K562 (cell line): ENCODE measurements at regions of chr17 and their contacts with region 1.

Region 1: GRCh38 chr17:64281962-64282727 is 19.1 kb upstream of the TEX2 start:
- DNase-seq: peak; percentile 73 to 81 (median 80)
- ATAC-seq: peak; percentile 80
- H3K4me3 ChIP-seq: no peak overlapping the region
- H3K27ac ChIP-seq: no peak overlapping the region
- H3K4me1 ChIP-seq: peaks cover 0 to 3% of the 10 kb centered on the region in 2 experiments; a peak in 1 of 5 replicates
- H3K27me3 ChIP-seq: no peaks in the 10 kb centered on the region
- CTCF ChIP-seq: peak; percentile 79 to 92 (median 88)
- EP300 ChIP-seq: no peak
- POLR2A ChIP-seq: no peak
- RAD21 ChIP-seq: peak; percentile 84

Region 2: DNA sequence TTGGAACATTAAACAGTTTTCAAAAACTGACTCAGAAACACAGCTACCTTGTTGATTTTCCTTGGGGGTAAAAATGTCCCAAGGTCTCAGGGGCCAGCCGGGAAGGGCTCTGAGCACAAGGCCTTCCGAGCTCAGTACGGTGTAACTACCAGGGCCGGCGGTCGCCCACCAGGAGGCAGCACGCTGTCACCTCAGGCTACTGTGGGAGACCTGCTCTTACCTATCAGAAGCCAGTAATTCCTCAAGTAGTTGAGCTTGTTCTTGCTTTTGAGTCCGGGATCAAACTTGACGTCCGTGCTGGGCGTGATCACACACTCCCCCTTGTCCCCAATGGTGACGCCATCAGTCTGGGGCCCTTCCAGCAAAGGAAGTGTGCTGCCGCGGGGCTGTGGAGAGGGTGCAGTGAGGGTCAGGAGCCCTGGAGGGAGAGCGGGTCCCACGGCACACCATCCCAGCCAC is 218.3 kb before region 1 on chr17:
- CTCF ChIA-PET with region 1: interaction called, 6 read pairs
- POLR2A ChIA-PET with region 1: no interaction called
- in situ Hi-C with region 1: no loop called
- intact Hi-C with region 1: loop called (anchors 10 kb)
- DNase-seq: peak; percentile 43 to 58 (median 54)
- ATAC-seq: peak; percentile 98
- H3K4me3 ChIP-seq: no peak overlapping the region
- H3K27ac ChIP-seq: no peak overlapping the region; the same call in 2 of the 3 replicates
- H3K4me1 ChIP-seq: peaks cover 0 to 4% of the 10 kb centered on the region in 2 experiments; a peak in 2 of 5 replicates
- H3K27me3 ChIP-seq: no peaks in the 10 kb centered on the region
- CTCF ChIP-seq: peak; percentile 67 to 83 (median 79)
- EP300 ChIP-seq: no peak
- POLR2A ChIP-seq: no peak
- RAD21 ChIP-seq: peak; percentile 65 to 86

Region 3: GRCh38 chr17:64499805-64500486 is 217.8 kb after region 1 on chr17:
- CTCF ChIA-PET with region 1: no interaction called
- POLR2A ChIA-PET with region 1: no interaction called
- in situ Hi-C with region 1: no loop called
- intact Hi-C with region 1: no loop called
- DNase-seq: no peak
- ATAC-seq: no peak
- H3K4me3 ChIP-seq: no peak overlapping the region
- H3K27ac ChIP-seq: no peak overlapping the region
- H3K4me1 ChIP-seq: peaks cover 9 to 12% of the 10 kb centered on the region in 2 experiments; a peak in 3 of 5 replicates
- H3K27me3 ChIP-seq: no peaks in the 10 kb centered on the region
- CTCF ChIP-seq: no peak
- EP300 ChIP-seq: no peak
- POLR2A ChIP-seq: peak; percentile 31; the same call in 1 of the 2 replicates
- RAD21 ChIP-seq: no peak